H1 (cell line): ENCODE measurements at regions of chr3 and their contacts with region 1.

Region 1: GRCh38 chr3:99366663-99367429 is 271.5 kb upstream of the COL8A1 start:
- DNase-seq: peak in 1 of 2 experiments; percentile 48
- H3K4me3 ChIP-seq: no peak overlapping the region
- H3K27ac ChIP-seq: no peak overlapping the region
- H3K4me1 ChIP-seq: no peaks in the 10 kb centered on the region
- H3K27me3 ChIP-seq: peaks cover 0 to 2% (median 0%) of the 10 kb centered on the region in 4 experiments; a peak in 1 of 7 replicates
- CTCF ChIP-seq: peak in 2 of 3 experiments; percentile 58 to 60; a peak in 3 of 4 replicates
- EP300 ChIP-seq: no peak
- POLR2A ChIP-seq: no peak
- RAD21 ChIP-seq: peak; percentile 53 to 57

Region 2: GRCh38 chr3:99114565-99115291 is 252.1 kb before region 1 on chr3:
- CTCF ChIA-PET with region 1: interaction called, 12 read pairs
- POLR2A ChIA-PET with region 1: no interaction called
- DNase-seq: peak; percentile 41 to 52
- H3K4me3 ChIP-seq: no peak overlapping the region
- H3K27ac ChIP-seq: no peak overlapping the region
- H3K4me1 ChIP-seq: no peaks in the 10 kb centered on the region
- H3K27me3 ChIP-seq: no peaks in the 10 kb centered on the region
- CTCF ChIP-seq: peak; percentile 79 to 96 (median 91)
- EP300 ChIP-seq: no peak
- POLR2A ChIP-seq: no peak
- RAD21 ChIP-seq: peak; percentile 99

Region 3: GRCh38 chr3:99351122-99351521 is 15.7 kb before region 1 on chr3:
- CTCF ChIA-PET with region 1: interaction called, 12 read pairs
- POLR2A ChIA-PET with region 1: no interaction called
- DNase-seq: no peak
- H3K4me3 ChIP-seq: no peak overlapping the region
- H3K27ac ChIP-seq: no peak overlapping the region
- H3K4me1 ChIP-seq: no peaks in the 10 kb centered on the region
- H3K27me3 ChIP-seq: no peaks in the 10 kb centered on the region
- CTCF ChIP-seq: no peak
- EP300 ChIP-seq: no peak
- POLR2A ChIP-seq: no peak
- RAD21 ChIP-seq: no peak

Region 4: DNA sequence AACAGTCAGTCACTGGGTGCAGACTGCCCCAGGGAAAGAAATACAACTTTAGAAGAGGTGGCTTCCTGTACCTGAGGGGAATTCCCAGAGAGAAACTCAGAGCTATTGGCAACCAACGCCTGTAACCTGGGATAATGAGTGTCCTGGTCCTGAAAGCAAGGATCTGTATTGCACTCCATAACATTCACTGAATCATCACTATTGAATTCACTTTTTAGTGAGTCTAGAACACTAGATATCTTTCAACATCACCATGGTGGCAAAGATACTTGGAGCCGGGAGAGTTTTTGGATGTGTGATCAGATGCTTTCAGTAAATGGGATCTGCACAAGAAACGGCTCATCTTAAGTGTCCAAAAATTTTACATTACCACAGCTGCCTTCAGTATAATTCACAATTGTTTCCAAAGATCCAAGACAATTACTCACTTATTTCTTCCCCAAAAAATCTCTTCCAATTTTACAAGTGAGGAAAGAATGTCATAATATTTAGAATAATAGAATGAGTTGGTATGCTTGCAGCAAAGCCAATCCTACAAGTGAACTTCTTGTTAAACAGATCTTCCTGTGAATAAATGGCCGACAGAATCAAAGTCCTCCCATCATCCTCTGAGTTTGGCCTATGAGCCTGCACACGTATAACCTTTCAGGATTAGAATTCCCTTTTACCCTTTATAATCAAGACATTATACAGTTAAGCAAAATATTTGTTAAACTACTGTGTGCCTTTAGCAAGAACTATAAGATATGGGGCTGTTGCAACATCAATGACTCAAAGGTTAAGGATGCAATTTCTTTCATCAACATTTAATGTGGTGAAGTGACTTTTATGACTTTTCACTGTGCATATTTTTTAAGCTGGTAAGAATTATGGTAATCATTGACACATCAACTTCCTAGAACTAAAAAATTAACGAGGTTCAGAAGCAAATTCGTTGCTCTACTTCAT is 28.3 kb after region 1 on chr3:
- CTCF ChIA-PET with region 1: no interaction called
- POLR2A ChIA-PET with region 1: no interaction called
- DNase-seq: no peak
- H3K4me3 ChIP-seq: no peak overlapping the region
- H3K27ac ChIP-seq: no peak overlapping the region
- H3K4me1 ChIP-seq: no peaks in the 10 kb centered on the region
- H3K27me3 ChIP-seq: no peaks in the 10 kb centered on the region
- CTCF ChIP-seq: no peak
- EP300 ChIP-seq: no peak
- POLR2A ChIP-seq: no peak
- RAD21 ChIP-seq: no peak